Lower leg skin (tissue), 4 donors: ENCODE measurements at regions of chr1 and their contacts with region 1.

Region 1: GRCh38 chr1:91282695-91283420 is 121.8 kb downstream of the HFM1 start:
- DNase-seq: peak in 1 of 2 donors; percentile 60
- H3K4me3 ChIP-seq: no peak overlapping the region
- CTCF ChIP-seq: peak in 1 of 3 donors; percentile 45
- POLR2A ChIP-seq: no peak

Region 2: GRCh38 chr1:91500756-91501522 is 218.1 kb after region 1 on chr1 and contains the start of gene CDC7:
- intact Hi-C with region 1: loop called (anchors 10 kb)
- DNase-seq: peak; percentile 84 to 98
- H3K4me3 ChIP-seq: peak within 1 kb of the TSS; percentile 41
- CTCF ChIP-seq: peak in 1 of 3 donors; percentile 80
- POLR2A ChIP-seq: no peak
- total RNA-seq, gene CDC7: 0.80 to 1.1 (median 1.1) TPM

Region 3: GRCh38 chr1:92298573-92299476 is 1016.0 kb after region 1 on chr1 and contains the starts of genes GLMN and RPAP2:
- intact Hi-C with region 1: loop called (anchors 5 kb)
- DNase-seq: peak; percentile 52 to 92
- H3K4me3 ChIP-seq: peak within 1 kb of the TSS; percentile 77
- CTCF ChIP-seq: no peak
- POLR2A ChIP-seq: peak in 1 of 2 donors; percentile 2
- total RNA-seq, gene GLMN: 4.6 to 9.3 (median 5.1) TPM
- total RNA-seq, gene RPAP2: 9.0 to 14.5 (median 9.3) TPM